Endothelial cell of umbilical vein (primary cell): ENCODE measurements at regions of chr1 and their contacts with region 1.

Region 1: DNA sequence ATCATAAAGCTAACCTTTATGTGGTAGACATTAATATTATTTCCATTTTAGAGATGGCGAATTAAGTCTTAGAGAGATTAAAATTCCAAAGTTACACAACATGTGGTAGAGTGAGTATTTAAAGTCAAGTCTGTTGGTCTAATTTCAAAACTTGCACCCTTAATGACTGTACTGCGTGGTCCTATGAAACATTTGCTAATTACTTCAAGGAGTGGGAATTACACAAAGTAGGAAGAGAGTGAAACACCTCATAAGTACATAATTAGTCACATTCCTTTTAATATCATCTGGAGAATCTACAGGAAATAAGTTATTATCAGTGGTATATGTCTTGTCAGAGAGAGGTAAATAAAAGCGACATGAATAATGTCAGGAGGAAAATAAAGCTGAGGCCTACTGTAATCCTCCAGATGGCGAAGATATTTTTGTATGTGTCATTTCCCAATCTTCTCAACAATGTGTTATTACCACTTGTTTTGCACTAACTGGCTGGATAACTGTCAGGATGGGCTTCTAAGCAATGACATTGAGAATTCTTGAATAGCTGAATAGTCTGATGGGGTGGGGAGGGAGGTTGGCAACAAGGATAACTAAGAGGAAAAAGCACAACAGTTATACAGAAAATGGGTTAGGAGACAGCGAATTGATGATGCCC is 95.5 kb downstream of the TNFSF18 start:
- DNase-seq: peak; percentile 85
- H3K4me3 ChIP-seq: no peak overlapping the region
- H3K27ac ChIP-seq: peak overlapping the region; percentile 90
- H3K4me1 ChIP-seq: peaks cover 43% of the 10 kb centered on the region
- H3K27me3 ChIP-seq: no peaks in the 10 kb centered on the region
- CTCF ChIP-seq: no peak
- POLR2A ChIP-seq: peak; percentile 33

Region 2: DNA sequence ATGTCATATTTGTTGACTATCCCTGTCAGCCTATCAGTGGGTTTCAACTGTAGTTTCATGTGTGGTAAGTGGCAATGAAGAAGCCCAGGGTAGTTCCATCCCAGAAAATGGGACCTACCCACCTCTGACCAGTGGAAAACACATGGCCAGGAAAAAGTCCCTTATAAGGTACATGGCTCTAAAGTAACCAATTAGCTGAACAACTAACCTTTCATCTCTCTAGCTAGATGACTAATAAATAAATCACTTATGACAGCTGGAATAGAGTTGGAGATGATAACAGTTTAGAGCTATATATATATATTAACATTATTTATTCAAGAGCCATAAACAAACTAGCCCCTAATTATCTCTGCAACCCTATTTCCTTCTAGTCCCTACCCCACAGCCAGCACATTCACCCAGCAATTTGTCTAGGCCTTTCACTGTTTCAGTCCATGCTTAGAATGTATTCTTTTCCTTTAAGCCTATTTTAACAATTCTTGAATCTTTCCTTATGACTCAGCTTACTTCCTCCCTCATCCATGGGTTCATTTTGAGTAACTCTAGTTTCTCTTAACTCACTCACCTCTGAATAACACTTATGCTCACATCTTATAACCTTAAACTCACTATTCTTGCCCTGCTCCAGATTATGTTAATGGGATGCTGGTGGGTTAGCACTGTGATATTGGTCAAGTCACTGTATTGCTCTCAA is 11.7 kb after region 1 on chr1:
- CTCF ChIA-PET with region 1: interaction called, 7 read pairs
- POLR2A ChIA-PET with region 1: no interaction called
- dilution Hi-C with region 1: no loop called
- intact Hi-C with region 1: loop called (anchors 1 kb)
- DNase-seq: peak; percentile 66
- H3K4me3 ChIP-seq: no peak overlapping the region
- H3K27ac ChIP-seq: peak overlapping the region; percentile 7
- H3K4me1 ChIP-seq: peaks cover 30% of the 10 kb centered on the region
- H3K27me3 ChIP-seq: no peaks in the 10 kb centered on the region
- CTCF ChIP-seq: no peak
- POLR2A ChIP-seq: no peak

Region 3: DNA sequence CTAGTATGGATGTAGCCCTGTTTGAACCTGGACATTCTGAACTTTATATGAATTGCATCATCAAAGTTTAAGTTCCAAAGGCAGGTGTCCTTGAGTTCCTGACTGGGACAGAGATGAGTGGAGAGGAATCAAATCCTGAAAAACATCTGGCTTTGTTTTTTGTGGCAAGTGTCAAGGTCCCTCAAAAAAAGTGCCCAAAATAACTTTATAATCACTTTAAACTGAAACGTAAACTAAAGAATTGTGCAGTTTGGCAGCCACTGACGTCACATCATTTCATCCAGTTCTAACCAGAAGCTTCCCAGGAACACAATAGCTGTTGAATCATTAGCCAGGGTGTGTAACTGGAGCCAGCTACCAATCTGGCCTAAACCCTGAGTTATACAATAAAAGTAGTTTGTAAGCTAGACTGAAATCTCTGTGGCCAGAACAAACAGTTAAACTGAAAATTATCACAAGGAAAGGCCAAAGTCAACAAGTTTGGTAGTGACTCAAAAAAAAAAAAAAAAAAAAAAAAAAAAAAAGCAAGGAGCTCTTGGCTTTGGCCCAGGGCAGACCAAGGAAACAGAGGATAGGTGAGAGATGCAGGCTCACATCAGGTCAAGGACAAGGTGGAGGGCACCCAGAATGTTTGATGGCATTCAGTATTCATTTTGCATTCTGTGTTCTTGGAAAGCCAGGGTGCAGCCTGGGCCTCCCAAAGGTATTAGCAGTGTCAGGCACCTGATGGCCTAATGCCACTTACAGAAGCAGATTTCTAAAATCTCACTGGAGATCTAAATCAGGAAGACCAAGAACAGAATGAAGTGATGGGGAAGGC is 21.1 kb after region 1 on chr1:
- CTCF ChIA-PET with region 1: interaction called, 4 read pairs
- POLR2A ChIA-PET with region 1: no interaction called
- dilution Hi-C with region 1: no loop called
- intact Hi-C with region 1: loop called (anchors 1 kb)
- DNase-seq: peak; percentile 79
- H3K4me3 ChIP-seq: no peak overlapping the region
- H3K27ac ChIP-seq: peak overlapping the region; percentile 72
- H3K4me1 ChIP-seq: peaks cover 31% of the 10 kb centered on the region
- H3K27me3 ChIP-seq: no peaks in the 10 kb centered on the region
- CTCF ChIP-seq: no peak
- POLR2A ChIP-seq: no peak

Region 4: DNA sequence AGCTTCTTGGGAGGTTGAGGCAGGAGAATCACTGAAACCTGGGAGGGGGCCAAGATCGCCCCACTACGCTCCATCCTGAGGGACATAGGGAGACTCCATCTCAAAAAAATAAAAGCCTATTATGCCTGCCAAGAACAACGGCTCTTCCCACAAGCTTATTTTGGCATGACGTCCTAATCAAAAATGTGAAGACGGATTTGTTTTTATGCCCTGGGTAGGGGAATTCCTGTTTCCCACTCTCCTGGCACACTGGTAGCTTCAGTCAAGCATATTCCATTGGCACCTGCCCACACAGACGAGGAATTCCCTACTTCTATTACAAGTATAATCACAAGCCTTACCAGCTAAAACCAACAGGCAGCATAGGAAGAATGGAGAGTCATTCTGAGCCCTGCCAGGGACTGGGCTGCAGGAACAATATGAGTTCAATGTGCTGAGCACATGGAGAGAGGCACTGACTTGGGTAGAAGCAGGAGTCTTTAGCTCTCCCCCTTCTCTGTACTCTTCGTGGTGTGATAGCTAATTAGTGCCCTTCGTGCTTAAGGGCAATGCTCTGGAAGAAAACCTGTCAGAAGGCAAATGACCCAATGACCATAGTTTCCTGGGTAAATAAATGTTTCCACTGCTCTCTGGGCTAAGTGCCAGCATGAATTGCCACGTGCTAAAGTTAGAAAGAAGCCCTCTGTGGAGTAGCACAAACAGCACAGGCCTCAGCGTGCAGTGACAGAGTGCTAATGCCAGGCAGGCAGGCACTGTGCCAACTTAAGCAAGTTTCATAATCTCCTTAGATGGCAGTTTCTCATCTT is 235.0 kb after region 1 on chr1:
- CTCF ChIA-PET with region 1: interaction called, 3 read pairs
- POLR2A ChIA-PET with region 1: interaction called, 3 read pairs
- dilution Hi-C with region 1: loop called (anchors 25 kb)
- intact Hi-C with region 1: loop called (anchors 1 kb)
- DNase-seq: peak; percentile 99
- H3K4me3 ChIP-seq: no peak overlapping the region
- H3K27ac ChIP-seq: peak overlapping the region; percentile 98
- H3K4me1 ChIP-seq: peaks cover 58% of the 10 kb centered on the region
- H3K27me3 ChIP-seq: no peaks in the 10 kb centered on the region
- CTCF ChIP-seq: no peak
- POLR2A ChIP-seq: peak; percentile 35